ENCODE measurements at regions of chrX and their contacts with region 1.

Region 1: DNA sequence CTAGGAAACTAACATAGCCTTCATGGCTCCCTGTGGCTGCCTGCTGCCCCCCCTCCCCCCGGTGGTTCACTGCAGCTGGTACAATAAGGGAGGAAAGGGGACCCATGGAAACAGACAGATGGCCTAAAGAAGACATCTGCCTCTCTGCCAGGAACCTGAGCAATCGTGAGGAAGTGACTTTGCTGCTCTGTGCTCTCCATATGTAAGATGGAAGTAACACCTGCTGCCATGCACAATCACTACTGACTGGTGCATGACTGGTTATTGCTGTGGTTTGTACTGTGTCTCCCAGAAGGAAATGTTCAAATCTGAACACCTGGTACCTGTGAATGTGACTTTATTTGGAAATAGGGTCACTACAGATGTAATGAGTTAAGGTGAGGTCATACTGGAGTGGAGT is 43.6 kb downstream of the CD99L2 start:
- DNase-seq: no peak
- ATAC-seq: no peak
- H3K4me3 ChIP-seq: no peak overlapping the region
- H3K4me3 Mint-ChIP-seq: no peak overlapping the region
- H3K27ac ChIP-seq: no peak overlapping the region
- H3K27ac Mint-ChIP-seq: no peak overlapping the region
- H3K4me1 ChIP-seq: no peaks in the 10 kb centered on the region
- H3K4me1 Mint-ChIP-seq: peaks cover 2% of the 10 kb centered on the region
- H3K27me3 ChIP-seq: no peaks in the 10 kb centered on the region
- H3K27me3 Mint-ChIP-seq: no peaks in the 10 kb centered on the region
- CTCF ChIP-seq: no peak

Region 2: DNA sequence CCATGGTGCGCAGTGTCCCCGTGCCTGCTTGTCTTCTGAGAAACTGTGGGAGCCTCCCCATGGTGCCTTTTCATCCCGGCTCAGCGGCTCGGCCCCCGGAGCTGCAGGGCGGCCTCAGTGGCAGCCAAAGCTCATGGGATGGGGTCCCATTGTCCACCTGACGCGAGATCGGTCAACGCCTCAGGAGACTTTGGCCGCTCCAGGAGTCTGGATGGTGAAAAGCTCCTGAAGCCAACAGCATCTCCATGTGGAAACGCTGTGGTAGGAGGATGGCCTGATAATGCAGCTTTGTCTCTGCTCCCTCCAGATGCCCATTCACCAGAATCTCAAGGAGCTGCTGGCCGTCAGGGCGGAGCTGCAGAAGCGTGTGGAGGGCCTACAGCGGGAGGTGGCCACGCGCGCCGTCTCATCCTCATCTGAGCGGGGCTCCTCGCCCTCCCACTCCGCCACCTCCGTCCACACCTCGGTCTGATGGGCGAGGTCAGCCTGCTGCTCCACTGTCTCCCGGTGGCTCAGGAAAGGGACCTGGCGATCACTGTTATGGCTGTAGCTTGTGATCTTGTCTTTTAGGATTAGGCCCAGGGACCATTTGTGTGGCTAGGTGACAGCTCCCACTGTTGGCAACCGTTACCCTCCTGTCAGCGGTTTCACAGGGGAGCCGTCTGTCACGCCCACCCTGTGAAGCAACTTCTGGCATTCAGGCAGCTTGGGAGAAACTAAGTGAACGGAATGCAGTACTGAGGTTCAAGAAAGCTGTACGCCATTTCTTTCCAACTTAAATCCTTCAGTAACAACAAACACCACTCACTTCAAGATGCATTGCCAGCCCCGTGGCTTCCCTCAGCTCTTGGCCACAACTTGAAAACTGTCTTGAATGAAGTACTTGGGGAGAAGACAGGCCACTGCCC is 92.3 kb before region 1 on chrX:
- CTCF ChIA-PET with region 1: no interaction called
- POLR2A ChIA-PET with region 1: no interaction called
- intact Hi-C with region 1: no loop called
- DNase-seq: no peak
- ATAC-seq: no peak
- H3K4me3 ChIP-seq: no peak overlapping the region
- H3K4me3 Mint-ChIP-seq: no peak overlapping the region
- H3K27ac ChIP-seq: no peak overlapping the region
- H3K27ac Mint-ChIP-seq: no peak overlapping the region
- H3K4me1 ChIP-seq: no peaks in the 10 kb centered on the region
- H3K4me1 Mint-ChIP-seq: no peaks in the 10 kb centered on the region
- H3K27me3 ChIP-seq: no peaks in the 10 kb centered on the region
- H3K27me3 Mint-ChIP-seq: no peaks in the 10 kb centered on the region
- CTCF ChIP-seq: no peak

Region 3: GRCh38 chrX:150879855-150880808 is 25.3 kb after region 1 on chrX:
- CTCF ChIA-PET with region 1: no interaction called
- POLR2A ChIA-PET with region 1: no interaction called
- intact Hi-C with region 1: loop called (anchors 2 kb)
- DNase-seq: no peak
- ATAC-seq: no peak
- H3K4me3 ChIP-seq: no peak overlapping the region
- H3K4me3 Mint-ChIP-seq: no peak overlapping the region
- H3K27ac ChIP-seq: no peak overlapping the region
- H3K27ac Mint-ChIP-seq: no peak overlapping the region
- H3K4me1 ChIP-seq: peaks cover 0 to 5% of the 10 kb centered on the region in 2 donors
- H3K4me1 Mint-ChIP-seq: peaks cover 24% of the 10 kb centered on the region
- H3K27me3 ChIP-seq: no peaks in the 10 kb centered on the region
- H3K27me3 Mint-ChIP-seq: no peaks in the 10 kb centered on the region
- CTCF ChIP-seq: no peak

Region 4: DNA sequence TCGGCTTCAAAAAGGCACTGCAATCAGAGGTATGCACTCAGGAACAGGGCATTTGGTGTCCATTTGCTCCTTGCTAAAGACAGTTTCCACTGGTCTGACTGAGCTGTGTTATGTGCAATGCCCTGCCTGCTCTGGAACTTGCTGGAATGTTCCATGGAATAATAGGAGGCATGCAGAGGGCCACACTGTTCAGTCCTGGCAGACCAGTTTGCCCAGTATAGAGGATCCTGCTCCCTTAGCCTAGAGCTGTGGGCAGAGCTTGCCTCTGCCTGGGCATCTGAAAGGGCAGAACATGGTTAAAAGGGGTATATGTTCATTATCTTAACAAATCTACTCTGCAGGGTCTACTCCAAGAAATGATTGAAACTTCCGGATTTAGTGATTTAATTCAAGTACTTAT is 71.4 kb after region 1 on chrX:
- CTCF ChIA-PET with region 1: no interaction called
- POLR2A ChIA-PET with region 1: no interaction called
- intact Hi-C with region 1: no loop called
- DNase-seq: no peak
- ATAC-seq: no peak
- H3K4me3 ChIP-seq: no peak overlapping the region
- H3K4me3 Mint-ChIP-seq: no peak overlapping the region
- H3K27ac ChIP-seq: no peak overlapping the region
- H3K27ac Mint-ChIP-seq: no peak overlapping the region
- H3K4me1 ChIP-seq: no peaks in the 10 kb centered on the region
- H3K4me1 Mint-ChIP-seq: no peaks in the 10 kb centered on the region
- H3K27me3 ChIP-seq: no peaks in the 10 kb centered on the region
- H3K27me3 Mint-ChIP-seq: no peaks in the 10 kb centered on the region
- CTCF ChIP-seq: no peak

Region 5: GRCh38 chrX:151042842-151043241 is 188.0 kb after region 1 on chrX:
- CTCF ChIA-PET with region 1: no interaction called
- POLR2A ChIA-PET with region 1: no interaction called
- intact Hi-C with region 1: no loop called
- DNase-seq: no peak
- ATAC-seq: no peak
- H3K4me3 ChIP-seq: no peak overlapping the region
- H3K4me3 Mint-ChIP-seq: no peak overlapping the region
- H3K27ac ChIP-seq: no peak overlapping the region
- H3K27ac Mint-ChIP-seq: no peak overlapping the region
- H3K4me1 ChIP-seq: no peaks in the 10 kb centered on the region
- H3K4me1 Mint-ChIP-seq: no peaks in the 10 kb centered on the region
- H3K27me3 ChIP-seq: no peaks in the 10 kb centered on the region
- H3K27me3 Mint-ChIP-seq: peaks cover 4% of the 10 kb centered on the region
- CTCF ChIP-seq: no peak

Measured in B cell (primary cell).